Heart left ventricle (tissue), 16 donors: ENCODE measurements at regions of chr7 and their contacts with region 1.

Region 1: GRCh38 chr7:44885394-44886317 is at the start of gene PURB:
- DNase-seq: peak; percentile 94 to 98 (median 96)
- ATAC-seq: peak; percentile 97 to 98 (median 98)
- H3K4me3 ChIP-seq: peak within 1 kb of the TSS; percentile 68 to 99 (median 90)
- H3K27ac ChIP-seq: peak within 1 kb of the TSS; percentile 81 to 99 (median 98)
- H3K4me1 ChIP-seq: peaks cover 5 to 51% (median 42%) of the 10 kb centered on the region in 12 donors
- H3K27me3 ChIP-seq: no peaks in the 10 kb centered on the region
- CTCF ChIP-seq: no peak
- POLR2A ChIP-seq: peak; percentile 87 to 94
- total RNA-seq, gene PURB: 9.8 to 19.4 (median 15.8) TPM

Region 2: GRCh38 chr7:44631458-44632115 is 254.1 kb before region 1 on chr7:
- intact Hi-C with region 1: no loop called
- DNase-seq: no peak
- ATAC-seq: no peak
- H3K4me3 ChIP-seq: peak overlapping the region in 1 of 12 donors; percentile 15
- H3K27ac ChIP-seq: peak overlapping the region in 9 of 12 donors; percentile 34 to 97 (median 80)
- H3K4me1 ChIP-seq: peaks cover 0 to 91% (median 56%) of the 10 kb centered on the region in 12 donors
- H3K27me3 ChIP-seq: no peaks in the 10 kb centered on the region
- CTCF ChIP-seq: no peak
- POLR2A ChIP-seq: no peak

Region 3: GRCh38 chr7:44973610-44974401 is 88.2 kb after region 1 on chr7:
- intact Hi-C with region 1: loop called in 1 of 10 experiments (anchors 5 kb)
- DNase-seq: peak in 3 of 5 donors; percentile 52 to 60 (median 54)
- ATAC-seq: peak in 3 of 4 donors; percentile 58 to 71 (median 68)
- H3K4me3 ChIP-seq: no peak overlapping the region
- H3K27ac ChIP-seq: no peak overlapping the region
- H3K4me1 ChIP-seq: peaks cover 0 to 28% (median 0%) of the 10 kb centered on the region in 12 donors
- H3K27me3 ChIP-seq: no peaks in the 10 kb centered on the region
- CTCF ChIP-seq: peak; percentile 31 to 66 (median 55)
- POLR2A ChIP-seq: no peak

Region 4: GRCh38 chr7:44986218-44987053 is 100.8 kb after region 1 on chr7:
- intact Hi-C with region 1: loop called in 2 of 10 experiments (anchors 10 kb)
- DNase-seq: peak; percentile 94 to 98 (median 97)
- ATAC-seq: peak; percentile 98 to 99 (median 98)
- H3K4me3 ChIP-seq: peak overlapping the region; percentile 18 to 74 (median 62)
- H3K27ac ChIP-seq: peak overlapping the region; percentile 89 to 98 (median 96)
- H3K4me1 ChIP-seq: peaks cover 0 to 54% (median 24%) of the 10 kb centered on the region in 12 donors
- H3K27me3 ChIP-seq: no peaks in the 10 kb centered on the region
- CTCF ChIP-seq: no peak
- POLR2A ChIP-seq: peak; percentile 39 to 96

Region 5: GRCh38 chr7:45105588-45106188 is 220.0 kb after region 1 on chr7:
- intact Hi-C with region 1: loop called in 2 of 10 experiments (anchors 5 to 10 kb)
- DNase-seq: peak in 1 of 5 donors; percentile 46
- ATAC-seq: peak; percentile 38 to 72 (median 66)
- H3K4me3 ChIP-seq: no peak overlapping the region
- H3K27ac ChIP-seq: peak overlapping the region in 2 of 12 donors; percentile 33 to 42
- H3K4me1 ChIP-seq: peaks cover 5 to 70% (median 36%) of the 10 kb centered on the region in 12 donors
- H3K27me3 ChIP-seq: no peaks in the 10 kb centered on the region
- CTCF ChIP-seq: no peak
- POLR2A ChIP-seq: no peak